Endothelial cell of umbilical vein (primary cell): ENCODE measurements at regions of chr15 and their contacts with region 1.

Region 1: GRCh38 chr15:83066734-83067637 is at the start of gene BTBD1:
- DNase-seq: peak; percentile 93
- H3K4me3 ChIP-seq: peak within 1 kb of the TSS; percentile 75 to 99 (median 98)
- H3K27ac ChIP-seq: peak within 1 kb of the TSS; percentile 66
- H3K4me1 ChIP-seq: peaks cover 36% of the 10 kb centered on the region
- H3K27me3 ChIP-seq: no peaks in the 10 kb centered on the region
- CTCF ChIP-seq: peak in 1 of 2 donors; percentile 14
- POLR2A ChIP-seq: peak; percentile 95
- total RNA-seq, gene BTBD1: 56.9 and 58.0 TPM in 2 replicates

Region 2: GRCh38 chr15:83053151-83053550 is 13.8 kb before region 1 on chr15:
- CTCF ChIA-PET with region 1: interaction called, 5 read pairs
- POLR2A ChIA-PET with region 1: no interaction called
- dilution Hi-C with region 1: no loop called
- intact Hi-C with region 1: loop called (anchors 1 kb)
- DNase-seq: peak; percentile 78
- H3K4me3 ChIP-seq: no peak overlapping the region
- H3K27ac ChIP-seq: peak overlapping the region; percentile 70
- H3K4me1 ChIP-seq: peaks cover 11% of the 10 kb centered on the region
- H3K27me3 ChIP-seq: no peaks in the 10 kb centered on the region
- CTCF ChIP-seq: no peak
- POLR2A ChIP-seq: no peak

Region 3: GRCh38 chr15:83092309-83092976 is 25.5 kb after region 1 on chr15:
- CTCF ChIA-PET with region 1: interaction called, 3 read pairs
- POLR2A ChIA-PET with region 1: no interaction called
- dilution Hi-C with region 1: no loop called
- intact Hi-C with region 1: loop called (anchors 1 kb)
- DNase-seq: peak; percentile 95
- H3K4me3 ChIP-seq: no peak overlapping the region
- H3K27ac ChIP-seq: peak overlapping the region; percentile 93
- H3K4me1 ChIP-seq: peaks cover 12% of the 10 kb centered on the region
- H3K27me3 ChIP-seq: no peaks in the 10 kb centered on the region
- CTCF ChIP-seq: no peak
- POLR2A ChIP-seq: peak; percentile 84

Region 4: GRCh38 chr15:83158401-83158800 is 91.4 kb after region 1 on chr15:
- CTCF ChIA-PET with region 1: no interaction called
- POLR2A ChIA-PET with region 1: no interaction called
- dilution Hi-C with region 1: no loop called
- intact Hi-C with region 1: no loop called
- DNase-seq: no peak
- H3K4me3 ChIP-seq: no peak overlapping the region
- H3K27ac ChIP-seq: no peak overlapping the region
- H3K4me1 ChIP-seq: peaks cover 9% of the 10 kb centered on the region
- H3K27me3 ChIP-seq: no peaks in the 10 kb centered on the region
- CTCF ChIP-seq: no peak
- POLR2A ChIP-seq: no peak